Cardiac septum (tissue), 1 donor: ENCODE measurements at regions of chr17 and their contacts with region 1.

Region 1: GRCh38 chr17:6473128-6473767 is 29.0 kb downstream of the PIMREG start:
- DNase-seq: peak; percentile 84

Region 2: GRCh38 chr17:6366221-6366666 is 107.0 kb before region 1 on chr17:
- intact Hi-C with region 1: no loop called
- DNase-seq: no peak

Region 3: GRCh38 chr17:6555331-6556120 is 82.3 kb after region 1 on chr17:
- intact Hi-C with region 1: loop called (anchors 10 kb)
- DNase-seq: no peak

Region 4: DNA sequence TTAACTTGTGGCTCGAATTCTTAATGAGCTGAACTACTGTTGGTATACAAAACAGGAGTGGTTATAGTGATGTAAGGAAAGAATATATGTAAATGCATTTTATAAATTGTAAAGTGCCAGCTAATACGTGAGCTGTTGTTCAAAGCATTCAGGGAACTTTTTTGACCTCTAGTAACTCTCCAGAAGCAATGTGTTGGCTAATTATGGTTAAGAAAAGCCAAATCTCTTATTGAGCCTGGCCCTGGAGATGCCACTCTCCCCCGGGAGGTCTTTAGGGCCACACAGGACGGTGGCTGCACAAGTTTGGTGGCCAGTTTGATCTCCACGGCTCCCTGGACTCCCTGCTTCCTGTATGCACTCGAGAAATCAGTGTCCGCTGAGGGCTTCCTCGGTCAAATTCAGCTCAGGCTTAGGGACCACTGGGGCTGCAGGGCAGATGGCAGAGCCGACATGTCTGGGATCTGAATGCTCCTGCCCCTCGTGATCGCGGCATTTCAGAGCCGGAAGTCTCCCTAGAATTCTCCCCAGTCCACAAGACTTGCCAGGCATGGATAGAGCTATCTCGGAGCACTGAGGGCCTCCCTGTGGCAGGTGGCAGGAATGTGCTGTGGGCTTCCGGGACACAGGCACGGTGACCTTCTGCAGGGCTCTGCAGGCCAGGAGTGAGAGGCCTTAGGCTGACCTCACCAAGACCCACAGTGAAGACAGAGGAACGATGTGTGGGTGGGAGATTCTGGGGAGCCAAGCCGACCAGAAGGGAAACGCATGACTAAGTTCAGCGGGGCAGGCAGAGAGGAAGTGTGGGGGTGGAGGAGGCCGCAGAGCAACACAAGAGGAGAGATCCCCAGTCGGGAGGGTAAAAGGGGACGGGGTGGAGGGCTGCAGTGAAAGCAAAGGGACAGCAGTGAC is 101.7 kb after region 1 on chr17:
- intact Hi-C with region 1: loop called (anchors 5 kb)
- DNase-seq: no peak